Activated T-helper 2 cell treated with anti-CD3 and anti-CD28 coated beads, Interferon-gamma antibody, Interleukin-2, Interleukin-4, amounts not matched to agents 10 μg/mL and 5 μg/mL and 100 μg/mL, durations not matched to agents 14 hours and 24 hours and 36 hours (primary cell): ENCODE measurements at regions of chr17 and their contacts with region 1.

Region 1: DNA sequence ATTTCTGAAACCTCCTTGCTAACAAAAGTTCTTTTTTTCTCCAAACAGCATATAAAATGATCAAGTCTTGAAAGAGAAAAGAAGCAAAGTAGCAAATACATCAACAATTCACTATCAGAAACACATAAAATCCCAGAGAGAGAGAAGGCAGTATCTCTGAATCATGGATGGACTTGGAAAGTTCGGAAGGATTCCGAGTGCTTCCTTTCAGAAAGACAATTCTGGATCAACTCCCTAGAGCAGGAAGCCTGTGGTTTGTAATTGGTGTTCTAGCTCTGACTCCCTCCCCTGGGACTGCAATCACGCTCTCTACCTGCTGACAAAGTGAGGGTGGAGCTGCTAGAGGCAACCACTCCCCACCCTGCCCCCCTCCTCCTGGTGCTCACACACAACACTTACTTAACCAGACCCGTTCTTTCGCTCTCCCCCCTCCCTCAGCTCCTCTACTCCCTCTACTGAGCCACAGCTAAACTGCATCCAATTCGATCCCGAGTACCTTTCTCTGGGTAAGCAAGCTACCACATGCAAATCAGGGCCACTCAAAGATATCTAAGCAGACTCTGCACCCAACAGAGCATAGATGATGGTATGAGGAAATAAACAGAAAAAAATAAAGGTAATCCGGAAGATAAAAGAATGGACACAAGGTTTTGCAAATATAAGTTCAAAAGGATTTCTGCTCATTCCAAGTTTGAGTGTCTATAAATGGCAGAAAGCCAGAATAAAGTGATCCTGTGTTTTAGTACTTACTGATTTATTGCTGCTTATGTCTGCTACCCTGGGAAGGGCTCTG is at the start of gene RNF43:
- DNase-seq: peak; percentile 87
- H3K4me3 Mint-ChIP-seq: peak within 1 kb of the TSS; percentile 84
- H3K27ac Mint-ChIP-seq: peak within 1 kb of the TSS; percentile 79
- H3K4me1 Mint-ChIP-seq: peaks cover 46% of the 10 kb centered on the region
- H3K27me3 Mint-ChIP-seq: no peaks in the 10 kb centered on the region
- total RNA-seq, gene RNF43: 20.5 and 23.9 TPM in 2 replicates

Region 2: DNA sequence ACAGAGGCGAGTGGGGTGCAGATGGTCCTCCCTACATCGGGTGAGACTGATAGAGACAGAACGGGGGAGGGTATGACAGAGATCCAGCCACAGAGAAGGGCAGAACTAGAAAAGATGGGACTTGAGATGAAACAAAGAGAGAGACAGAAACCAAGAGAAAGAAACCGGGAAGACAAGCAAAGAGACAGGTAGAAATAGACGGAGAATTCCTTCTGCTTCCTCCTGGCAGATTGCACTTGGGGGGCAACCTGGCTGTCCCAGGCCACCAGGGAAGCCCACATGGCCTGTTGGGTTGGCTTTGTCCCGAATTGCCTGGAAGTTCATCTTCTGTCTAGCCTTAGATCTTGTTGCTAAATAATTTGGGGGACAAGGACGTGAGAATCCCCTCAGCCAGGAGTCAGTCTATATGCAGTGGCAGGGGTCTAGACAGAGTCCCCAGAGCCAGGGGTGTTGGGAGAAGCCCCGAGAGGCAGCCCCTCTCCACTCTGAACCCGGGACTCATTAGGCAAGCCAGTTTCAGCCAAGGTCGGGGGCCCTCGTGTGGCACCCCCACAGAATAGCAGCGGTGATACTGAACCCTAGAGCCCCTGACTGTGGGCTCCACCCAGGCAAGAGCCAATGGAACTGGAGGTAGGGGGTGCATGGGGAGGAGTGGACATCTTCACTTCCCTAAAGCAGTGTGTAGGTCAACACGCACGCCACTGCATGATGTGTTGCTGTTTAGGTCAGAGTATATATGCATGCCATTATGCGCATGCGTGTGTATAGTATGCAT is 88.3 kb before region 1 on chr17:
- intact Hi-C with region 1: loop called (anchors 1 kb)
- DNase-seq: peak; percentile 87
- H3K4me3 Mint-ChIP-seq: peak overlapping the region; percentile 99
- H3K27ac Mint-ChIP-seq: peak overlapping the region; percentile 88
- H3K4me1 Mint-ChIP-seq: peaks cover 21% of the 10 kb centered on the region
- H3K27me3 Mint-ChIP-seq: no peaks in the 10 kb centered on the region

Region 3: DNA sequence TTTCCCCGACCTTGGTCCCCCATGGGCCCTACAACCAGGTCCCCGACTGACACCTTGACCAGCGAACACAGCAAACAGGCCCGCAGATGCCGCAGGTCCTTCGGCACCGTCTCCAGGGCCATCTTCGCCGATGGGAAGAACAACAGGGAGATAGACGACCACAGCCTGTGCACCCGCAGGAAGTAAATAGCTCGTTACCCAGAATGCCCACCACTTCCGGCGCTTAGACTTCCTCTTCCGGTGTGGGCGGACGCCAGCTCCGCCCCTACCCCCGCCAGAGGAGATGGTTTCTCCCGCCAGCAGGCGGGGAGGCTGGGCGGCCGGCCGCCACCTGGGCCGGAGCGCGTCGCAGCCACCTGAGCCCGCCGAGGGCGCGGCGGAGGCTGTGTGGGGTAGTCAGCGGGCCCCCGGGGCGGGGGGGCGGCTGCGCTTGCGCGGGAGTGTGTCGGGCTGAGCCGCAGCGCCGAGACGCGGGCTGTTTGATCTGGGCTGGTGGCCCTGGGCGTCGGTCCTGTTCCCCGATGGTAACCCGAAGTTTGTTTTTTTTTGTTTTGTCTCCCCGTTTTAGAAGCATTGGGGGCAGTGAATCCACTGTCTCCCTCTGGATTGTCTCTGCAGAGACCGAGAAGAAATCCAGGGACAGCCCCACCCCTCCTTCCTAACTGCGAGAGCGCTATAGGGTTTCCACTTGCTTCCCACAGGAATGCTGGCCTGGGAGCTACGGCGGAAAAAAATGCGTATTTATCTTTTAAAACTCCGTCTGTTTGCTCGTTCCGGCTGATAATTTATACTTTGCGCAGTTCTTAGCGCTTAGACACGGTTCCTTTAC is 65.3 kb before region 1 on chr17 and contains the start of gene SUPT4H1:
- intact Hi-C with region 1: loop called (anchors 1 kb)
- DNase-seq: peak; percentile 90
- H3K4me3 Mint-ChIP-seq: peak within 1 kb of the TSS; percentile 100
- H3K27ac Mint-ChIP-seq: peak within 1 kb of the TSS; percentile 98
- H3K4me1 Mint-ChIP-seq: peaks cover 49% of the 10 kb centered on the region
- H3K27me3 Mint-ChIP-seq: no peaks in the 10 kb centered on the region
- total RNA-seq, gene SUPT4H1: 153 and 160 TPM in 2 replicates

Region 4: GRCh38 chr17:58402047-58402446 is 15.4 kb before region 1 on chr17:
- intact Hi-C with region 1: loop called (anchors 1 kb)
- DNase-seq: no peak
- H3K4me3 Mint-ChIP-seq: peak overlapping the region; percentile 45
- H3K27ac Mint-ChIP-seq: peak overlapping the region; percentile 83
- H3K4me1 Mint-ChIP-seq: peaks cover 50% of the 10 kb centered on the region
- H3K27me3 Mint-ChIP-seq: no peaks in the 10 kb centered on the region